ENCODE measurements at regions of chr17 and their contacts with region 1.

Region 1: GRCh38 chr17:17496189-17497064 is at the start of gene RASD1:
- DNase-seq: peak; percentile 93 to 96
- ATAC-seq: peak; percentile 81 to 94 (median 88)
- H3K4me3 ChIP-seq: peak within 1 kb of the TSS; percentile 84
- H3K27ac ChIP-seq: peak within 1 kb of the TSS; percentile 89
- H3K4me1 ChIP-seq: peaks cover 18% of the 10 kb centered on the region
- H3K27me3 ChIP-seq: no peaks in the 10 kb centered on the region
- CTCF ChIP-seq: peak; percentile 98
- total RNA-seq, gene RASD1: 4.4 to 436 (median 33.8) TPM

Region 2: GRCh38 chr17:17356149-17356930 is 140.1 kb before region 1 on chr17:
- intact Hi-C with region 1: loop called (anchors 5 kb)
- DNase-seq: peak; percentile 72 to 85
- ATAC-seq: peak; percentile 82 to 93 (median 82)
- H3K4me3 ChIP-seq: no peak overlapping the region
- H3K27ac ChIP-seq: no peak overlapping the region
- H3K4me1 ChIP-seq: peaks cover 9% of the 10 kb centered on the region
- H3K27me3 ChIP-seq: no peaks in the 10 kb centered on the region
- CTCF ChIP-seq: peak; percentile 99

Region 3: DNA sequence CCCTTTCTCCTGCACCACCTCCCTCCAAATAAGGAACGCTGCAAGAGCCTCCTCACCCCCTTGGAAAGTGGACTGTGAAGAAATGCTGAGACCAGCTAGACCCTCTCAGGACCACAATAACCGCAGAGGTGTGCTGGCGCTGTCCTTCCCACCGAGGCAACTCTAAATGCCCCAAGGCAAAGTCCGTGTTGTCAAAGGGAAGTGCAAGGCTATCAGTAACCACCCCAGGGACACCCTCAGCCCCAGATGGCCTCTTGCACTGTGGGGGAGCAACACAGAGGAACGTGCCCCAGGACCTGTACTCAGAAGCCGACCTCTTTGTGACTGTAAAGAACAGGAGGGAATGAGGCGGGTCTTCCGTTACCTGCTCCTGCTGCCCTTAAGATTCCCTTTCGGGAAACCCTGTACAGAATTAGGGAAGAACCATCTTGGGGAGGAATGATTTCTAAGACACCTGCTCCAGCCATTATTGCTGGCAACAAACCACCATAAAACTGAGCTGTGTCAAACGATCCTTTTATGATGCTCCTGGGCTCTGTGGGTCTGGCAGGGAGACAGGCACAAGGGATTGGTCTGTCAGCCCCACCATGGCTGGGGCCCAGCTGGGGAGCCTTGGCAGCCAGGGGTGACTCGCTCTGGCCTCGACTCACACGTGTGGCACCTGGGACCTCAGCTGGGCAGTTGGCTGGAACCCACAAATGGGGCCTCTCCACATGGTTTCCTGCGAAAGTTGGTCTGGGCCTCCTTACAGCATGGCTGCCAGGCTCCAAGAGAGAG is 34.2 kb before region 1 on chr17:
- intact Hi-C with region 1: no loop called
- DNase-seq: no peak
- ATAC-seq: no peak
- H3K4me3 ChIP-seq: no peak overlapping the region
- H3K27ac ChIP-seq: no peak overlapping the region
- H3K4me1 ChIP-seq: no peaks in the 10 kb centered on the region
- H3K27me3 ChIP-seq: no peaks in the 10 kb centered on the region
- CTCF ChIP-seq: no peak

Region 4: DNA sequence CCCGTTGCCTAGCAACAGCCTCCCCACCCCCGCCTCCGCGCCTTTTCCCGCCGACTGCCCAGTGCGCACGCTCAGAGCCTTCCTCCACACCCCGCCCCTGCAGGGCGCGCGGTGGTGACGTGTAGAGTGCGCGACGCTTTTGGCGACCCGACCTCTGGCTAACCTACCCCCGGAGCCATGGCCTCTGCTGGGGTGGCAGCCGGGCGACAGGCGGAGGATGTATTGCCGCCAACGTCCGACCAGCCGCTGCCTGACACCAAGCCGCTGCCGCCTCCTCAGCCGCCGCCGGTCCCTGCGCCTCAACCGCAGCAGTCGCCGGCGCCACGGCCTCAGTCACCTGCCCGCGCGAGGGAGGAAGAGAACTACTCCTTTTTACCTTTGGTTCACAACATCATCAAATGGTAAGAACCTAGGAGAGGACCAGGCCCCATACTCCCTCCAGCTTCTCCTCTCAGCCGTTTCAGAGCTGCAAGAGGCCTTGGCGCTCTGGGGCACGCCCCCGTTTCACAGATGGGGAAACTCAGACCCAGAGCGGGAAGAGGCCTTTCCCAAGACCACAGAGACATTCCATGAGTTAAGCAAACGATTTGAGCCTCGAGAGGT is 19.5 kb before region 1 on chr17 and contains the start of gene MED9:
- intact Hi-C with region 1: loop called in 1 of 2 experiments (anchors 2 kb)
- DNase-seq: peak; percentile 94 to 97
- ATAC-seq: peak; percentile 98 to 100 (median 100)
- H3K4me3 ChIP-seq: peak within 1 kb of the TSS; percentile 90
- H3K27ac ChIP-seq: peak within 1 kb of the TSS; percentile 87
- H3K4me1 ChIP-seq: peaks cover 32% of the 10 kb centered on the region
- H3K27me3 ChIP-seq: peaks cover 0 to 3% (median 0%) of the 10 kb centered on the region in 3 donors
- CTCF ChIP-seq: no peak
- total RNA-seq, gene MED9: 12.4 to 29.6 (median 20.3) TPM

Region 5: GRCh38 chr17:17520599-17521232 is 24.3 kb after region 1 on chr17:
- intact Hi-C with region 1: loop called in 1 of 2 experiments (anchors 2 kb)
- DNase-seq: peak; percentile 10 to 47
- ATAC-seq: no peak
- H3K4me3 ChIP-seq: no peak overlapping the region
- H3K27ac ChIP-seq: no peak overlapping the region
- H3K4me1 ChIP-seq: peaks cover 6% of the 10 kb centered on the region
- H3K27me3 ChIP-seq: no peaks in the 10 kb centered on the region
- CTCF ChIP-seq: no peak

Region 6: GRCh38 chr17:17526369-17526768 is 29.9 kb after region 1 on chr17:
- intact Hi-C with region 1: loop called (anchors 2 kb)
- DNase-seq: peak; percentile 71 to 94
- ATAC-seq: peak; percentile 86 to 89 (median 88)
- H3K4me3 ChIP-seq: peak overlapping the region; percentile 18
- H3K27ac ChIP-seq: peak overlapping the region; percentile 84
- H3K4me1 ChIP-seq: peaks cover 17% of the 10 kb centered on the region
- H3K27me3 ChIP-seq: no peaks in the 10 kb centered on the region
- CTCF ChIP-seq: no peak

Region 7: GRCh38 chr17:17568749-17569195 is 72.3 kb after region 1 on chr17:
- intact Hi-C with region 1: loop called (anchors 1 to 2 kb)
- DNase-seq: peak; percentile 74 to 91
- ATAC-seq: peak; percentile 39 to 72 (median 56)
- H3K4me3 ChIP-seq: no peak overlapping the region
- H3K27ac ChIP-seq: no peak overlapping the region
- H3K4me1 ChIP-seq: peaks cover 41% of the 10 kb centered on the region
- H3K27me3 ChIP-seq: no peaks in the 10 kb centered on the region
- CTCF ChIP-seq: peak; percentile 76